Endothelial cell of umbilical vein (primary cell): ENCODE measurements at regions of chr2 and their contacts with region 1.

Region 1: DNA sequence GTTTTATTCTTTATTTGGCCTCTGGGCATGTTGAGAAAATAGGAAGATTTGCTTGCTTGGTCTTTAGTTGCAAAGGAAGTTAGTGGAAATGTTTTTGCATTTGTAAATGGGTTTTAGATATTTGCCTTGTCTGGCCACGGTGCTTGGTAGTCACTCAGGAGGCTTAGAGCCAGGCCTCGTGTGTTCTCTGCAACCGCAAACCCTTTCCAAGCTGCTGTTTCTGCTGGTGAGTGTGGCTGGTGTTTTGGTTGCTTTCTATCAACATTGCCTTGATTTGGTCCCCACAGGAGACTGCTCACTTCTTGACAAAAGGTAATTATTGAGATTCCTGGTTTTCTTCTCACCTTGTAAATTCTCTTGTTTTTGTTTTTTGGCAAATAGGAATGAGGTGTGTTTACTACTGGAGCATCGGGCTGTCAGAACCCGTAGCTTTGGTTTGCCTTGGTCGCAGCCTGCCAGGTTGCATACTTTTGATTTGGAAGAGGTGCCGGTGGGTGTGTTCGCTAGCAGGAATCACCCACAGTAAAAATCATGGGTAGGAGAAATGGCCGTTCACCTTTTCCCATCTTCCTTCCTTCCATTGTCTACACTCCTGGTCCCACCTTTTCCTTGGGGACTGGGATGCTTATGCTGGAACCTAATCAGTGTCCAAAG is 15.8 kb downstream of the ASAP2 start:
- DNase-seq: no peak
- H3K4me3 ChIP-seq: no peak overlapping the region
- H3K27ac ChIP-seq: no peak overlapping the region
- H3K4me1 ChIP-seq: peaks cover 60% of the 10 kb centered on the region
- H3K27me3 ChIP-seq: no peaks in the 10 kb centered on the region
- CTCF ChIP-seq: no peak
- POLR2A ChIP-seq: no peak

Region 2: DNA sequence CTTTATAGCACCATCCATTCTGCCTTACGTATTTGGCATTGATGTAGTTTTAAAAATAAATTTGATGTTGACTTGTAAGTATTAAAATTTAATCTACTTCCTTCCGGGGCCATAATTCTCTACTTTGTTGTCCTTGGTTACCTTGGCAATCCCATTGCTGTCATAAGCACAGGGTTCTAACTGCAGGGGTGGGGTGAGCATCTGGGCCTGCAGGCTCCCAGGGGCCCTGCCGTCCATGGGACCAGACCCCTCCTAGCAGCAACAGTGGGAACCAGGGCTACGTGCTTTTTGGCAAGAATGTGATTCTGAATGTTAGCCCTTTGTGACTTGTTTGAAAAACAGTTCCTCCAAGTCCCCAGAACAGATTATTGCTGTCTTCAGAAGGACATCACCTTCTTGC is 10.9 kb before region 1 on chr2:
- CTCF ChIA-PET with region 1: interaction called, 38 read pairs
- POLR2A ChIA-PET with region 1: interaction called, 5 read pairs
- dilution Hi-C with region 1: no loop called
- intact Hi-C with region 1: loop called (anchors 1 kb)
- DNase-seq: peak; percentile 44
- H3K4me3 ChIP-seq: no peak overlapping the region
- H3K27ac ChIP-seq: peak overlapping the region; percentile 21
- H3K4me1 ChIP-seq: peaks cover 43% of the 10 kb centered on the region
- H3K27me3 ChIP-seq: no peaks in the 10 kb centered on the region
- CTCF ChIP-seq: no peak
- POLR2A ChIP-seq: no peak